ENCODE measurements at regions of chr7 and their contacts with region 1.

Region 1: DNA sequence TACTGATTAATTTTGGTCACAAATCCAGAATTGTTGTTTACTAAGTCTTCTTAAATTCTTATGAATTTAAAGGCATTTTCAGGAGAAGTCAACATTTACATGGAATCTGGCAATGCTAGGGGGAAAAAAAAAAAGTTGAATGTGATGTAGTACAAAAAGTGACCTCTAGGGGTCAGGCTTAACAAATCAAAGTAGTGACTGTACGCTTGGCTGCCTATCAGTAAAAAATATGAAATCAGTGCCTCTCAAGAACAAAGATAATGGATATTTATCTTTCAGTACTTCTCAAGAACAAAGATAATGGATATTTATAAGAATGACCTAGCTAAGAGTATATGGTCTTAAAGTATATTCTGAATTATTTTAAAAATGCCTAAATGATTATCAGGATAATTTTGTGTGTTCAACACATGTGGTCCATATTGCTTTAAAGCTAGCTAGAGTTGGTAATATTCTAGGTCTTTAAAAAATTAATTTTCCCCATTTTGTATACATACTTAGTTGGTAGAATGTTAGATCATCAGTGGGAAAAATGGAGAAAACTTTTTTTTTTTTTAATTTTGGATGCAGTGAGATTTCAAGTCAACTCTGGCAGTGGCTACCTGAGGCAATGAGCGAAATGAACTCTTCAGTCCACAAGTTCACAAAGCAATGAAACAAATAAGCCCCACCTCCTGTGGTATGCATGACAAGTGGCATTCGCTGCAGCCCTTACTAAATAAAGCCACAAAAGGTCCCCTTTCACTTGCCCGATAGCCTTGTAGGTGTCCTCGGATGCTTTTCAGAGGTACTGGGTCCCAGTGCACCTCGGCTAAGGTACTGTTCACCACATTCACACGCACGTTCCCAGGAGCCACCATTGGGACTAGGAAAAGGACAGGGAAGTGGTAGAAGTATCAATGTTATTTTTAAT is 51.2 kb upstream of the LAMB4 start:
- DNase-seq: no peak
- H3K4me3 ChIP-seq: no peak overlapping the region
- H3K27ac ChIP-seq: no peak overlapping the region
- H3K4me1 ChIP-seq: no peaks in the 10 kb centered on the region
- H3K27me3 ChIP-seq: no peaks in the 10 kb centered on the region
- CTCF ChIP-seq: peak in 3 of 4 experiments; percentile 45 to 77 (median 47)
- EP300 ChIP-seq: no peak
- POLR2A ChIP-seq: no peak

Region 2: GRCh38 chr7:108499566-108499965 is 318.2 kb after region 1 on chr7:
- intact Hi-C with region 1: loop called (anchors 2 kb)
- DNase-seq: no peak
- H3K4me3 ChIP-seq: no peak overlapping the region
- H3K27ac ChIP-seq: no peak overlapping the region
- H3K4me1 ChIP-seq: no peaks in the 10 kb centered on the region
- H3K27me3 ChIP-seq: no peaks in the 10 kb centered on the region
- CTCF ChIP-seq: no peak
- EP300 ChIP-seq: no peak
- POLR2A ChIP-seq: no peak

Measured in sigmoid colon (tissue), 7 donors.